Caco-2 (cell line): ENCODE measurements at regions of chr12 and their contacts with region 1.

Region 1: DNA sequence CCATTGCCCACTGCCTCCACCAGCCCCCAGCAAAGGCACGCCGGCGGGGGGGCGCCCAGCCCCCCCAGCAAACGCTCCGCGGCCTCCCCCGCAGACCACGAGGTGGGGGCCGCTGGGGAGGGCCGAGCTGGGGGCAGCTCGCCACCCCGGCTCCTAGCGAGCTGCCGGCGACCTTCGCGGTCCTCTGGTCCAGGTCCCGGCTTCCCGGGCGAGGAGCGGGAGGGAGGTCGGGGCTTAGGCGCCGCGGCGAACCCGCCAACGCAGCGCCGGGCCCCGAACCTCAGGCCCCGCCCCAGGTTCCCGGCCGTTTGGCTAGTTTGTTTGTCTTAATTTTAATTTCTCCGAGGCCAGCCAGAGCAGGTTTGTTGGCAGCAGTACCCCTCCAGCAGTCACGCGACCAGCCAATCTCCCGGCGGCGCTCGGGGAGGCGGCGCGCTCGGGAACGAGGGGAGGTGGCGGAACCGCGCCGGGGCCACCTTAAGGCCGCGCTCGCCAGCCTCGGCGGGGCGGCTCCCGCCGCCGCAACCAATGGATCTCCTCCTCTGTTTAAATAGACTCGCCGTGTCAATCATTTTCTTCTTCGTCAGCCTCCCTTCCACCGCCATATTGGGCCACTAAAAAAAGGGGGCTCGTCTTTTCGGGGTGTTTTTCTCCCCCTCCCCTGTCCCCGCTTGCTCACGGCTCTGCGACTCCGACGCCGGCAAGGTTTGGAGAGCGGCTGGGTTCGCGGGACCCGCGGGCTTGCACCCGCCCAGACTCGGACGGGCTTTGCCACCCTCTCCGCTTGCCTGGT is at the start of gene CDKN1B:
- DNase-seq: peak; percentile 97
- H3K4me3 ChIP-seq: peak within 1 kb of the TSS; percentile 77
- H3K4me3 Mint-ChIP-seq: peak within 1 kb of the TSS; percentile 76
- H3K27ac Mint-ChIP-seq: peak within 1 kb of the TSS; percentile 71
- H3K4me1 ChIP-seq: peaks cover 41% of the 10 kb centered on the region
- H3K4me1 Mint-ChIP-seq: peaks cover 47% of the 10 kb centered on the region
- H3K27me3 ChIP-seq: no peaks in the 10 kb centered on the region
- H3K27me3 Mint-ChIP-seq: no peaks in the 10 kb centered on the region
- CTCF ChIP-seq: no peak
- total RNA-seq, gene CDKN1B: 107 and 115 TPM in 2 replicates

Region 2: DNA sequence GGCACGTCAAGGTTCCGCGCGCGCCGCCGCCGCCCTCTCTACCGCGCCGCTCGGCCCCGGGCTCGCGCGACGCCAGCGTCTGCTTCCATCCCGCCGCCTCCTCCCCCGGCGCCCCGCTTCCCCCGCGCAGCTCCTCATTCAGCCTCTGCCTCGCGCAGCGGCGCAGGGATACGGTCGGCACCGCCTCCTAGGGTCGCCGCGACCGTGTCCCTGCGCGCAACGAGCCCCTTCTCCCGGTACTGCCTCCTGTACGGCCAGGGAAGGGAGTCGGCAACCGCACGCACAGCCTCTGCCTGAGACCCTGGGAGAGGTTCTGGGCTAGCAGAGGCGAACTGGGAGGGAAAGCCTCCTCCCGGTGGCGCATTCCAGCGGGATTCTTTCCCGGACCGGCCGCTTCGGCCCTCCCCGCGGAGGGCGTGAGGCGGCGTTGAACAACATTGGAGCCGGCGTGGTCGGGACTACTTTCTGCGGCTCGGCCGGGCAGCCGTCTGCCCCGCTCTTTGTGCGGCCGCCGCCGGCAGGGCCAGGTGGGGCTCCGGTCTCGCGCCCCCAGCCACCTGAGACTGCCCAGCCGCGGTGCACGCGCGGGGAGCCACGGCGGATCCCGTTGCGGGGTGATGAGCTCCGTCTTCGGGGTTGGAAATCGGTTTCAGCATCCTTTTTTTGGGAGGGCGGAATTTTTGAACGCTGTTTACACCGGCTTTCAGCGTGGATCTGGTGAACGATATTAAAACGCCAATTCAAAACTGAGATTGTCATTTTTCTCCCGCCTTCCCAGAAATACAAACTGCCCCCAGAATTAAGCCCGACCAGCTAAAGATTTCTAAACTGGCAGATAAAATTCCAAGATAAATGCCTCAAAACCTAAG is 449.9 kb before region 1 on chr12 and contains the start of gene LRP6:
- CTCF ChIA-PET with region 1: no interaction called
- POLR2A ChIA-PET with region 1: interaction called, 6 read pairs
- intact Hi-C with region 1: loop called (anchors 10 kb)
- DNase-seq: peak; percentile 97 to 98
- H3K4me3 ChIP-seq: peak within 1 kb of the TSS; percentile 100
- H3K4me3 Mint-ChIP-seq: peak within 1 kb of the TSS; percentile 91
- H3K27ac Mint-ChIP-seq: peak within 1 kb of the TSS; percentile 99
- H3K4me1 ChIP-seq: peaks cover 12% of the 10 kb centered on the region; the same call in 1 of the 2 replicates
- H3K4me1 Mint-ChIP-seq: peaks cover 33% of the 10 kb centered on the region
- H3K27me3 ChIP-seq: no peaks in the 10 kb centered on the region
- H3K27me3 Mint-ChIP-seq: no peaks in the 10 kb centered on the region
- CTCF ChIP-seq: no peak
- total RNA-seq, gene LRP6: 72.7 and 78.4 TPM in 2 replicates

Region 3: DNA sequence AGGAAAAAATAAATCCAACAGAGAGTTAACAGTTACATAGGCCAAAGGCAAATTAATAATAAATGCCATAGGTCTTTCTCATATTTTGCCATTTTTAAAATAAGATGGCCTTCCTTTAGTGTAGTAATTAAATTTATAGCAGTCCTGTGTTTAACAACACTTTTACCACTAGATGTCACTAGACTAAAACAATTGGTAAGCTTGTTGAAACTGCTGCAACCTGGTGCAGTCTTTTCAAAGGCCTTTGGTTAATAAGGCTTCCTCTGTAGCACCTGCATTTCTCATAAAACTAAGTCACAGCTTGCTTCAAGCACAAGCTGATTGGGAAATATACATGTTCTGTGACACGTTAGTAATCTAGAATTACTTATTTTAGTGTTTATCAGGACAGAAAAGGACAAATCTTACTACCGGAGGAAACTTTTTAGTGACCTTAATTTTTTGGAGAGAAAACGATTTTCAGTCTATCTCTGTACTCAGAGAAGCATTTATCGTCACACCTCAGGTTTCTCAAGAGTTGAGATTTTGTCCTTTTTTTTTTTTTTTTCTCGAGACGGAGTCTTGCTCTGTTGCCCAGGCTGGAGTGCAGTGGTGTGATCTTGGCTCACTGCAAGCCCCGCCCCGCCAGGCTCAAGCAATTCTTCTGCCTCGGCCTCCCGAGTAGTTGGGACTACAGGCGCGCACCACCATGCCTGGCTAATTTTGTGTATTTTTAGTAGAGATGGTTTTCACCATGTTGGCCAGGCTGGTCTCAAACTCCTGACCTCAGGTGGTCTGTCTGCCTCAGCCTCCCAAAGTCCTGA is 340.1 kb before region 1 on chr12:
- CTCF ChIA-PET with region 1: no interaction called
- POLR2A ChIA-PET with region 1: no interaction called
- intact Hi-C with region 1: loop called (anchors 5 kb)
- DNase-seq: peak; percentile 64 to 71
- H3K4me3 ChIP-seq: no peak overlapping the region
- H3K4me3 Mint-ChIP-seq: no peak overlapping the region
- H3K27ac Mint-ChIP-seq: no peak overlapping the region
- H3K4me1 ChIP-seq: peaks cover 34% of the 10 kb centered on the region
- H3K4me1 Mint-ChIP-seq: peaks cover 38% of the 10 kb centered on the region
- H3K27me3 ChIP-seq: no peaks in the 10 kb centered on the region
- H3K27me3 Mint-ChIP-seq: no peaks in the 10 kb centered on the region
- CTCF ChIP-seq: peak; percentile 72 to 96

Region 4: GRCh38 chr12:12696562-12697383 is 20.2 kb before region 1 on chr12:
- CTCF ChIA-PET with region 1: no interaction called
- POLR2A ChIA-PET with region 1: interaction called, 4 read pairs
- intact Hi-C with region 1: loop called (anchors 2 kb)
- DNase-seq: peak; percentile 91 to 93
- H3K4me3 ChIP-seq: peak overlapping the region; percentile 72
- H3K4me3 Mint-ChIP-seq: peak overlapping the region; percentile 79
- H3K27ac Mint-ChIP-seq: peak overlapping the region; percentile 90
- H3K4me1 ChIP-seq: peaks cover 14% of the 10 kb centered on the region
- H3K4me1 Mint-ChIP-seq: peaks cover 16% of the 10 kb centered on the region
- H3K27me3 ChIP-seq: no peaks in the 10 kb centered on the region
- H3K27me3 Mint-ChIP-seq: no peaks in the 10 kb centered on the region
- CTCF ChIP-seq: no peak

Region 5: GRCh38 chr12:12779529-12779928 is 62.5 kb after region 1 on chr12:
- CTCF ChIA-PET with region 1: no interaction called
- POLR2A ChIA-PET with region 1: no interaction called
- intact Hi-C with region 1: loop called (anchors 1 kb)
- DNase-seq: no peak
- H3K4me3 ChIP-seq: no peak overlapping the region
- H3K4me3 Mint-ChIP-seq: no peak overlapping the region
- H3K27ac Mint-ChIP-seq: no peak overlapping the region
- H3K4me1 ChIP-seq: peaks cover 33% of the 10 kb centered on the region
- H3K4me1 Mint-ChIP-seq: peaks cover 40% of the 10 kb centered on the region
- H3K27me3 ChIP-seq: no peaks in the 10 kb centered on the region
- H3K27me3 Mint-ChIP-seq: no peaks in the 10 kb centered on the region
- CTCF ChIP-seq: no peak

Region 6: DNA sequence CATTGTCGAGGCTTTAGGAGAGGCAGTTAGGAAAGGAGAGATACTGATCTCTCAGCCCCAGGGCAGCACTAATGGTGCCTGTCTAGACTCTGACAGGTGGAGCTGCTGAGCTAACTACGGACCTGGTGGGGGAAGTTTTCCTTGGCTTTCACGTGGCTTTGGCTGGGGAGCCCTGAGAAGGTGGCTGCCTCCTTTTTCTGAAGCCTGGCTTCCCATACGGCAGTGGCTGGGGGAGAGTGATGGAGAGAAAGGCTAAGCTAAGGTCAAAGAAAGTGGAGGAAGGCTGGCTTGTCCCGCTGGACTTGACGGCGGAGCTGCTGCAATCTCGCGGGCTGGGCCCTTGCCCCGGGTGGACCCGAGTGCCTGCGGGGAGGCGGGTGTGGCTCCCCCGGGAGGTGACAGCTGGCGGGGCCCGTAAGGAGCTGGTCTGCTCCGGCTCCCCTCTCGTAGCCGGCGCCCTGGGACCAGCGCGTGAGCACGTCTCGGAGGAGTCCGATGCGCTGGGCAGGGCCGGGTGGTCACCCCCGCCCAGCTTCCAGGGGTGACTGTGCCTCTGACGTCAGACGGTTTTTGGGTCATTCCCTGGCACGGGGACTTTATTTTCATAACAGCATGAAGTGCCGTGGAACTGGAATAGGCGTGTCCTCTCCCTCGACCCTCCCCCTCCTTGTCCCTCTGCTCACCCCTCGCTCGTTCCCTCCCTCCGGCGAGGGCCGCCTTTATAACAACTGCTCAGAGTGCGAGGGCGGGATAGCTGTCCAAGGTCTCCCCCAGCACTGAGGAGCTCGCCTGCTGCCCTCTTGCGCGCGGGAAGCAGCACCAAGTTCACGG is 174.0 kb after region 1 on chr12 and contains the start of gene GPRC5A:
- CTCF ChIA-PET with region 1: no interaction called
- POLR2A ChIA-PET with region 1: no interaction called
- intact Hi-C with region 1: loop called (anchors 2 kb)
- DNase-seq: peak; percentile 93 to 95
- H3K4me3 ChIP-seq: peak within 1 kb of the TSS; percentile 56
- H3K4me3 Mint-ChIP-seq: peak within 1 kb of the TSS; percentile 83
- H3K27ac Mint-ChIP-seq: peak within 1 kb of the TSS; percentile 96
- H3K4me1 ChIP-seq: peaks cover 31% of the 10 kb centered on the region
- H3K4me1 Mint-ChIP-seq: peaks cover 53% of the 10 kb centered on the region
- H3K27me3 ChIP-seq: no peaks in the 10 kb centered on the region
- H3K27me3 Mint-ChIP-seq: no peaks in the 10 kb centered on the region
- CTCF ChIP-seq: peak in 1 of 2 experiments; percentile 36
- total RNA-seq, gene GPRC5A: 73.9 and 99.7 TPM in 2 replicates